Endothelial cell of umbilical vein (primary cell): ENCODE measurements at regions of chr22 and their contacts with region 1.

Region 1: DNA sequence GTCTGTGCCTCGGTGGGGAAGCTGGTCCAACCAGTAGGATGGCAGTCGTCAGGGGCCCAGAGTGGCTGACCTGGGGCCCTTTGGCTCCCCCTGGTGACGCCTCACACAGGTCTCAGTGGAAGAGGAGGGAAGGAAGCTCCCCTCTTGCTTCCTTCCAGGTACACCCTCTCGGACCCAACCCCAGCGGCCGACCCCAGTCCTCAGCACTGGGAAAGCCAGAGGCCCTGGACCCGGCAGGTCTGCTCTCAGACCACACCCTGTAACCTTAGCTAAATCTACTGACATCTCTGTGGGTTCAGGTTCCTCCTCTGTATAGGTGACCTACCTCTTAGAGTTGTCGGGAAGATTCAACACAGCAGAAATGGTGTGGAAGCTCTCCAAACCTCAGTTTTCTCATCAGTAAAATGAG is 3.4 kb upstream of the SCUBE1 start:
- DNase-seq: peak; percentile 29
- H3K4me3 ChIP-seq: no peak overlapping the region
- H3K27ac ChIP-seq: no peak overlapping the region
- H3K4me1 ChIP-seq: no peaks in the 10 kb centered on the region
- H3K27me3 ChIP-seq: peaks cover 20 to 23% of the 10 kb centered on the region in 2 experiments
- CTCF ChIP-seq: peak; percentile 46 to 78
- POLR2A ChIP-seq: no peak

Region 2: DNA sequence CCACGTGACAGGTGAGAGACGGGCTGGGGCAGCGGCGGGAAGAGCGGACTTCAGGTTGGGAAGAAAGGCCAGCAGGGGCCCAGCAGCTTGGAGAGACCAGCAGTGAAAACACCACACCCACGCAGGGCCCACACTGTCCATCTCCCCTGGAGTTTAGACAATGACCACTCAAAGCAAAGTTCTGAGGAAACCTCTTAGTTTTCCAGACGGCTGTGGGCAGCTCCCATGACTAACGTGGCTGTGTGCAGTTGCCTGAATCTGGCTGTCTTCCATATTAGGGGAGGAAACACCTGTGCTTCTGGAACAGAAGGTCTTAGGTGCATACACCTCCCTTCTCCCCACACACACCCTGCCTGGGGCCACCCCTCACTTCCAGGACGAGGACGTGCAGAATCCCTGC is 89.0 kb before region 1 on chr22:
- CTCF ChIA-PET with region 1: interaction called, 10 read pairs
- POLR2A ChIA-PET with region 1: no interaction called
- dilution Hi-C with region 1: no loop called
- intact Hi-C with region 1: no loop called
- DNase-seq: peak; percentile 75
- H3K4me3 ChIP-seq: no peak overlapping the region
- H3K27ac ChIP-seq: no peak overlapping the region
- H3K4me1 ChIP-seq: no peaks in the 10 kb centered on the region
- H3K27me3 ChIP-seq: no peaks in the 10 kb centered on the region
- CTCF ChIP-seq: no peak
- POLR2A ChIP-seq: no peak

Region 3: GRCh38 chr22:43273902-43274484 is 72.5 kb before region 1 on chr22:
- CTCF ChIA-PET with region 1: interaction called, 334 read pairs
- POLR2A ChIA-PET with region 1: no interaction called
- dilution Hi-C with region 1: no loop called
- intact Hi-C with region 1: loop called (anchors 1 kb)
- DNase-seq: peak; percentile 57
- H3K4me3 ChIP-seq: no peak overlapping the region
- H3K27ac ChIP-seq: no peak overlapping the region
- H3K4me1 ChIP-seq: no peaks in the 10 kb centered on the region
- H3K27me3 ChIP-seq: no peaks in the 10 kb centered on the region
- CTCF ChIP-seq: peak; percentile 61 to 63
- POLR2A ChIP-seq: no peak

Region 4: GRCh38 chr22:43356881-43357280 is 10.4 kb after region 1 on chr22:
- CTCF ChIA-PET with region 1: interaction called, 15 read pairs
- POLR2A ChIA-PET with region 1: interaction called, 4 read pairs
- dilution Hi-C with region 1: no loop called
- intact Hi-C with region 1: no loop called
- DNase-seq: no peak
- H3K4me3 ChIP-seq: no peak overlapping the region
- H3K27ac ChIP-seq: no peak overlapping the region
- H3K4me1 ChIP-seq: no peaks in the 10 kb centered on the region
- H3K27me3 ChIP-seq: no peaks in the 10 kb centered on the region
- CTCF ChIP-seq: no peak
- POLR2A ChIP-seq: no peak